Aorta (tissue), 5 donors: ENCODE measurements at regions of chr1 and their contacts with region 1.

Region 1: DNA sequence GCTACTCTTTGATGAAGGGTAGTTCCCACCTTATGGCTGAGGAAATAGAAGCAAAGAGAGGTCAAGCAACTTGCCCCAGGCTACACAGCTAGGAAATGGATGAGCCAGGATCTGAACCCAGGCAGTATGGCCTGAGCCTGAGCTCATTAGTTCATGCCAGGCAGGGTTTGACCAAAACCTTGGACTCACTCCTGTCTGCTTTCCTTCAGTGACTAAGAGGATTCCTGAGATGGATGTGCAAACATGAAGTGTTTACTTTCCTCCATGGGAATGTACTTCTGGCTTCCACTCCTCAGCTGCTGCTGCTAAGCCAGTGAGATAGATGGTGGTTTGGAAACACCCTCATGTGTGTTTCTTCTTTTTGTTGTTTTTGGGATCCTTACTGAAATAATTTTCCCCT is 35.1 kb upstream of the ERRFI1 start:
- DNase-seq: peak in 1 of 2 donors; percentile 69
- ATAC-seq: peak; percentile 85
- H3K4me3 ChIP-seq: peak overlapping the region in 1 of 2 donors; percentile 54
- H3K27ac ChIP-seq: peak overlapping the region in 1 of 2 donors; percentile 98
- H3K4me1 ChIP-seq: peaks cover 2 to 5% of the 10 kb centered on the region in 2 donors
- H3K27me3 ChIP-seq: no peaks in the 10 kb centered on the region

Region 2: GRCh38 chr1:7752512-7753417 is 308.4 kb before region 1 on chr1:
- intact Hi-C with region 1: no loop called
- DNase-seq: peak in 1 of 2 donors; percentile 56
- ATAC-seq: peak; percentile 76
- H3K4me3 ChIP-seq: peak overlapping the region; percentile 53 to 64
- H3K27ac ChIP-seq: no peak overlapping the region
- H3K4me1 ChIP-seq: peaks cover 0 to 1% of the 10 kb centered on the region in 2 donors
- H3K27me3 ChIP-seq: no peaks in the 10 kb centered on the region

Region 3: DNA sequence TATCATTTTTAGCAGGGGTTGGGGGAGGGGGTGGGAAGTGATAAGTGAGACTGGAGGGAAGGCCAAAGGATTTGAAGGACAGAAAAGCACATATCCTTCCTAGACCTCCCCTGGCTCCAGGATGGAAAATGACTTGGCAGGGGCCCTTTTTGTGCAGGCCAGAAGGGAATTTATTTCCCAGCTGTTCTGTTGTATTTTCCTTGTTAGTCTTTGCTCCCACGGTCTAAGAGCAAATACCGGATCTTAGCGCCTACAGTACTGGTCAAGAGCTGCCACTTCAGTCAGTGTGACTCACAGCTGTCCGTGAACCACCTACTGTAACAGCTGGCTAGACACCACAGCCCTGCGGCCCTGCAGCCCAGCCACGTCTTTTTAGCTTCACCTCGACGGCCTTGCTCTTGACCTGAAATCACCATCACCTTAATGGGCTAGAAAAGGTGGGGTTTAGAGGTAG is 15.9 kb after region 1 on chr1:
- intact Hi-C with region 1: loop called in 1 of 2 experiments (anchors 2 kb)
- DNase-seq: peak; percentile 83 to 84
- ATAC-seq: peak; percentile 93
- H3K4me3 ChIP-seq: no peak overlapping the region
- H3K27ac ChIP-seq: peak overlapping the region; percentile 40 to 96
- H3K4me1 ChIP-seq: peaks cover 0 to 2% of the 10 kb centered on the region in 2 donors
- H3K27me3 ChIP-seq: no peaks in the 10 kb centered on the region

Region 4: GRCh38 chr1:8121261-8122170 is 60.3 kb after region 1 on chr1:
- intact Hi-C with region 1: loop called in 1 of 2 experiments (anchors 5 kb)
- DNase-seq: peak; percentile 76 to 77
- ATAC-seq: peak; percentile 87
- H3K4me3 ChIP-seq: no peak overlapping the region
- H3K27ac ChIP-seq: peak overlapping the region; percentile 88 to 99
- H3K4me1 ChIP-seq: peaks cover 8 to 21% of the 10 kb centered on the region in 2 donors
- H3K27me3 ChIP-seq: no peaks in the 10 kb centered on the region